Activated T-helper 1 cell treated with anti-CD3 and anti-CD28 coated beads, Interleukin-12 subunit alpha, Interleukin-12 subunit beta, Interleukin-2, Interleukin-4 antibody, amounts not matched to agents 30 ng/mL and 10 ng/mL and 1 ng/mL, durations not matched to agents 14 hours and 24 hours and 36 hours (primary cell): ENCODE measurements at regions of chr11 and their contacts with region 1.

Region 1: GRCh38 chr11:112219476-112220232 is 6.6 kb upstream of the PTS start:
- DNase-seq: peak; percentile 33
- H3K4me3 Mint-ChIP-seq: no peak overlapping the region
- H3K27ac Mint-ChIP-seq: no peak overlapping the region
- H3K4me1 Mint-ChIP-seq: peaks cover 6% of the 10 kb centered on the region
- H3K27me3 Mint-ChIP-seq: peaks cover 4% of the 10 kb centered on the region

Region 2: GRCh38 chr11:112280268-112281126 is 60.8 kb after region 1 on chr11:
- intact Hi-C with region 1: loop called (anchors 1 kb)
- DNase-seq: peak; percentile 64
- H3K4me3 Mint-ChIP-seq: peak overlapping the region; percentile 85
- H3K27ac Mint-ChIP-seq: peak overlapping the region; percentile 77
- H3K4me1 Mint-ChIP-seq: peaks cover 39% of the 10 kb centered on the region
- H3K27me3 Mint-ChIP-seq: peaks cover 4% of the 10 kb centered on the region

Region 3: GRCh38 chr11:112453601-112454577 is 234.2 kb after region 1 on chr11:
- intact Hi-C with region 1: no loop called
- DNase-seq: no peak
- H3K4me3 Mint-ChIP-seq: no peak overlapping the region
- H3K27ac Mint-ChIP-seq: no peak overlapping the region
- H3K4me1 Mint-ChIP-seq: peaks cover 5% of the 10 kb centered on the region
- H3K27me3 Mint-ChIP-seq: peaks cover 6% of the 10 kb centered on the region

Region 4: DNA sequence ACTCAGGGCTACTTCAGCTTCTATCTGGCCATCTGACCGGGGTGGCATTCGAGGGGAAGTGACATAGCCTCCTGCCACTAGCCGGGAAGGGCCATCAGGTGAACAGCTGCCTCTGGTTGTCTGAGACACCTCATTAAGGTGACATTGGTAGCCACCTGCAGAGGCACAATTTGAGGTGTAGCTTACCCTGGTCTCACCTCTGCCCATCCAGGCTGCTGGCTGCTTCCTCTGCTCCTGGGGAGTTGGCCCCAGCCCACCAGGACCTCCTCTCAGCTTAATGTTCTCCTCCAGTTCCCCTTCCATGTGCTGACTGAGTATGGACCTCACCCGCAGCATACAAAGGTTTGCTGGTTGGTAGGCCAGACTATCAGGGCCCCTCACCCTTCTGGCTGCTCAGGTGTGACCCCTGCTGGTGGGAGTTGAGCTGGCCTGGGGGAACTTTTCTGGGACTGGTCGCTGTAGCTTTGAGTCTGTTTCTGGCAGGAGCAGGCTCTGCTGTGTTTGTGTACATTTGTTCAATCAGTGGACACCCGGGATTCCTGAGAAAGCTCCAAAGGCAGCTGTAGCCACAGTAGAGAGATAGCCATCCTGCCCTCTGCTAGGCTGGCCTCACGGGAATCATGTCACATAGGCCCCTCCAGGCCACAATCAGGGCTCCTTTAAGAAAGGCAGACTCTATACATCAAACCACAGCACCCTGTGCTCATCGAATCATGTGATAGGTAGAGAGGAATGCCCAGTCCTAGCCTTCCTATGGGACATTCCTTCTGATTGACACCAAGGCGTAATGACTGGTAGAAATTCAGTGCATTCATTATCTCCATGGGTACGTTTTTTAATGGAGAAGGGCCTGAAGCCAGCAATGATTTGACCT is 336.1 kb after region 1 on chr11:
- intact Hi-C with region 1: loop called (anchors 1 kb)
- DNase-seq: peak; percentile 33
- H3K4me3 Mint-ChIP-seq: no peak overlapping the region
- H3K27ac Mint-ChIP-seq: no peak overlapping the region
- H3K4me1 Mint-ChIP-seq: no peaks in the 10 kb centered on the region
- H3K27me3 Mint-ChIP-seq: peaks cover 3% of the 10 kb centered on the region

Region 5: GRCh38 chr11:112588252-112588694 is 368.6 kb after region 1 on chr11:
- intact Hi-C with region 1: loop called (anchors 1 kb)
- DNase-seq: peak; percentile 8
- H3K4me3 Mint-ChIP-seq: no peak overlapping the region
- H3K27ac Mint-ChIP-seq: peak overlapping the region; percentile 20
- H3K4me1 Mint-ChIP-seq: no peaks in the 10 kb centered on the region
- H3K27me3 Mint-ChIP-seq: no peaks in the 10 kb centered on the region

Region 6: DNA sequence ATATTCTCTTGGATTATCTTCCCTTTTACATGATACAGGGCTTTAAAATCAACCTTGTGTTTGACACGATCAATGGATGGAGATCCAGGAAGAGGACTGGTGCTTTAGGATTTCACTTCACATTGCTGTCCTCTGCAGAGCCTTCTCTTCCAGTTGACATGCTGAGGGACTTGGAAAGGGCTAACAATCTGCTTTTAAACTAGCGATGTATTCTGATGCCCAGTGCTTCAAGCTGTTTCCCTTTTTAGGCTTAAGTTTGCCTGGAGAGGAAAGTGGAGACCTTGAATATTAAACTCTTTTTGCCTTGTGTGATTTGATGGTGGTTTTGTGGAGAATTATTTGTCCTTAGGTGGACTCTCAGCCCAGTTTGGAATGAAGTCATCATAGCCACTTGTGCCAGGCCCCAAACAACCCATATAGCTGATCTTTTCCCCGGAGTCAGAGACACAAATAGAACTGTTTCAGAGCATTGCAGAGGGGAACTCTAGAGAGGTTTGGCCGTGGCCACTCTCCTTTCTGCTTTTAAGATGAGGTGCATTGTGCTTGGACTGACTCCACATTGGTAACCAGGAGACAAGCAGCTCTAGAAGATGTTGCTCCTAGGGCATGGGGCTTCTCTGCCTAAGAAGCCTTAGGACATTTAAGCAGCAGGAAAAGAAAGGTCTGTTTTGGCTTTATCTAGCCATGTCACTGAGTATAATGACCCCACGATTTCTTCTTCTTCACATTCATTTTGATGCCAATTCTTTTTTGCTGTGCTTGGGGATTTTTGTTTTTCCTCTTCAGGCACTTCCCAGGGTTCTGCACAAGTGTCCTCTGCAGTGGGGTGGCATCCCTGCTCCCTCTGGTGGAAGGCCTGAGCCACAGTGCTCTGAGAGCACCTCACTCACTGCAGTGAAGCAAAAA is 894.4 kb after region 1 on chr11:
- intact Hi-C with region 1: loop called (anchors 5 kb)
- DNase-seq: no peak
- H3K4me3 Mint-ChIP-seq: no peak overlapping the region
- H3K27ac Mint-ChIP-seq: no peak overlapping the region
- H3K4me1 Mint-ChIP-seq: no peaks in the 10 kb centered on the region
- H3K27me3 Mint-ChIP-seq: peaks cover 3% of the 10 kb centered on the region

Region 7: GRCh38 chr11:113289431-113290187 is 1070.0 kb after region 1 on chr11:
- intact Hi-C with region 1: loop called (anchors 1 kb)
- DNase-seq: peak; percentile 52
- H3K4me3 Mint-ChIP-seq: no peak overlapping the region
- H3K27ac Mint-ChIP-seq: no peak overlapping the region
- H3K4me1 Mint-ChIP-seq: no peaks in the 10 kb centered on the region
- H3K27me3 Mint-ChIP-seq: peaks cover 4% of the 10 kb centered on the region

Region 8: GRCh38 chr11:113532697-113533424 is 1313.2 kb after region 1 on chr11:
- intact Hi-C with region 1: loop called (anchors 1 kb)
- DNase-seq: peak; percentile 10
- H3K4me3 Mint-ChIP-seq: no peak overlapping the region
- H3K27ac Mint-ChIP-seq: no peak overlapping the region
- H3K4me1 Mint-ChIP-seq: no peaks in the 10 kb centered on the region
- H3K27me3 Mint-ChIP-seq: peaks cover 30% of the 10 kb centered on the region